Caco-2 (cell line): ENCODE measurements at regions of chr10 and their contacts with region 1.

Region 1: GRCh38 chr10:14185316-14186045 is 145.2 kb downstream of the FRMD4A start:
- DNase-seq: peak; percentile 92 to 96
- H3K4me3 ChIP-seq: no peak overlapping the region; the same call in 1 of the 2 replicates
- H3K4me3 Mint-ChIP-seq: peak overlapping the region; percentile 73
- H3K27ac Mint-ChIP-seq: peak overlapping the region; percentile 99
- H3K4me1 ChIP-seq: peaks cover 15% of the 10 kb centered on the region
- H3K4me1 Mint-ChIP-seq: peaks cover 30% of the 10 kb centered on the region
- H3K27me3 ChIP-seq: no peaks in the 10 kb centered on the region
- H3K27me3 Mint-ChIP-seq: peaks cover 4% of the 10 kb centered on the region
- CTCF ChIP-seq: no peak

Region 2: DNA sequence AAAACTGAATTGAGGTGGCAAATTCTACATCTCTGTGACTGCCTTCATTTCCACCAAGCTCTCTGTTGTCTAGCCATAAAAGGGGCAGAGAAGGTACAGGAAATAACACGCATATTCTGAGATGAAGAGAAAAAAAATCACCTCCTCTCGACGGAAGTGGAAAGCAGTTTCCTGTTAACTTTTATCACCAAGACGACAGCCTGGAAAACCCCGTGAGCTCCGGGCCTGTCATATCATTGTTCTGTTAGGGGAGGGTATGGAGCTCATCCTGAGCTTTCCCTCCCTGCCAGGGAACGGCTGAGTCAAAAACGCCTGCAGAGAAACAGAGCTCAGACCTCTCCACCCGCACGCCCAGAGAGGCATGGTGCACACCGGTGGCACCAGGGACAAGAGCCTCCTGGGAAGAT is 398.5 kb before region 1 on chr10:
- CTCF ChIA-PET with region 1: interaction called, 3 read pairs
- POLR2A ChIA-PET with region 1: interaction called, 3 read pairs
- intact Hi-C with region 1: loop called (anchors 5 kb)
- DNase-seq: no peak
- H3K4me3 ChIP-seq: no peak overlapping the region
- H3K4me3 Mint-ChIP-seq: no peak overlapping the region
- H3K27ac Mint-ChIP-seq: no peak overlapping the region
- H3K4me1 ChIP-seq: no peaks in the 10 kb centered on the region; the same call in 1 of the 2 replicates
- H3K4me1 Mint-ChIP-seq: no peaks in the 10 kb centered on the region
- H3K27me3 ChIP-seq: no peaks in the 10 kb centered on the region; the same call in 1 of the 2 replicates
- H3K27me3 Mint-ChIP-seq: no peaks in the 10 kb centered on the region
- CTCF ChIP-seq: no peak

Region 3: DNA sequence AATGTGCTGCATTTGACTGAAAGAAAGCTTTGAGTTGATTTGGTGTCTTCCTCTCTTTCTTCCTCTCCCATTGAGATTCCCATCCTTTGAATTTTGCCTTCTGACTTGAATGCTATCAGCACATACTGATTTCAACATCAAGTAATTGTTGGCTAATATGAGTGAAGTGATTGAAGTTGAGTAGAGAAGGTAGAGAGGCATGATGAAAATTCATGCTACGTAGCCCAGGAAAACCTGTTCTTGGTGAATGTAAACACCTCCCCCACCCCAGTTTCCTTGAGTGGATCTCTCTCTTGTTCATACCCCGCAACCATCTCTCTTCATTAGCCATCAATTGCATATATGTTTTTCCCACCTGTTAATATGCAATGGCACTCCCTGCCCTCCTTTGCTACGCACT is 48.1 kb before region 1 on chr10:
- CTCF ChIA-PET with region 1: no interaction called
- POLR2A ChIA-PET with region 1: interaction called, 3 read pairs
- intact Hi-C with region 1: loop called (anchors 1 kb)
- DNase-seq: peak in 1 of 2 experiments; percentile 57
- H3K4me3 ChIP-seq: no peak overlapping the region
- H3K4me3 Mint-ChIP-seq: no peak overlapping the region
- H3K27ac Mint-ChIP-seq: peak overlapping the region; percentile 19
- H3K4me1 ChIP-seq: peaks cover 11% of the 10 kb centered on the region
- H3K4me1 Mint-ChIP-seq: peaks cover 14% of the 10 kb centered on the region
- H3K27me3 ChIP-seq: no peaks in the 10 kb centered on the region
- H3K27me3 Mint-ChIP-seq: peaks cover 6% of the 10 kb centered on the region
- CTCF ChIP-seq: no peak

Region 4: DNA sequence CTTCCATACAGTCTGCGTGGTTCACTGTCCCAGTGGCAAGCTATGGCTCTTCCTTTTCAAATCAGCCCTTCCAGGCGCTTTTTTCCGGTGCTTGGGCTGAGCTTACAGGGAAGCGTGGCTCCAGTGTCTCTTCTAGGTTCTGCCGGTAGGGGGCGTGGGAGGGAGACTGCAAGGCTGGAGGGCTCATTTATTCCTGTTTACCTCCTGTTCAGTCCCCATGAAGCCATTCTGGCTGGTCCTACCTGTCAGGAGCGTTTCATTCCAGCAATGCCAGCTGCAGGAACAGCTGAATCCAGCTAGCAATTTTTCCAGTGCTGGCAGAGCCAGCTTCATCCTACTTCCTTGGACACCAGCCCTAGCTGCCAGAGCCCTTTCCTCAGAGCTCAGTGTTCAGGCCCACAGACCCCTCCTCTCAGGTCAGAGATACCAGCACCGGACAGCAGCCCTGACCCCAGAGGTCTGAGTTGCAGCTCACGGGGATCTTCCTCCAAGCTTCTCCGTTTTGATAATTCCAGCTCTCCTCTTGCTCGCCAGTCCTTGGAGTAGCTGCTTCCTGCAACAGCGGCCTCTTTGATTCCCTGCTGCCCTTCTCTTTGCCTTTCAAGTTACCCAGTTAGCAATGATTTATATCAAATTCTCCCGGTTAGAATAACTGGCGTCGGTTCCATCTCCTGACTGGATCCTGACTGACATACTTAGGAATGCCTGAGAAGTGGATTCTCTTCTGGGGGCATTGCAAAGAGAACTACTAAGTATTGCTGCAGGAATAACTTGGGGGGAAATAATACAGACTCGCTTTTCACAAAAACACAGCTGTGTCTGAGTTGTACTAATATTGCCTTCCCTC is 15.4 kb after region 1 on chr10:
- CTCF ChIA-PET with region 1: interaction called, 49 read pairs
- POLR2A ChIA-PET with region 1: interaction called, 7 read pairs
- intact Hi-C with region 1: no loop called
- DNase-seq: peak in 1 of 2 experiments; percentile 49
- H3K4me3 ChIP-seq: no peak overlapping the region
- H3K4me3 Mint-ChIP-seq: no peak overlapping the region
- H3K27ac Mint-ChIP-seq: no peak overlapping the region
- H3K4me1 ChIP-seq: no peaks in the 10 kb centered on the region
- H3K4me1 Mint-ChIP-seq: peaks cover 4% of the 10 kb centered on the region
- H3K27me3 ChIP-seq: no peaks in the 10 kb centered on the region
- H3K27me3 Mint-ChIP-seq: peaks cover 3% of the 10 kb centered on the region
- CTCF ChIP-seq: peak; percentile 41 to 57

Region 5: DNA sequence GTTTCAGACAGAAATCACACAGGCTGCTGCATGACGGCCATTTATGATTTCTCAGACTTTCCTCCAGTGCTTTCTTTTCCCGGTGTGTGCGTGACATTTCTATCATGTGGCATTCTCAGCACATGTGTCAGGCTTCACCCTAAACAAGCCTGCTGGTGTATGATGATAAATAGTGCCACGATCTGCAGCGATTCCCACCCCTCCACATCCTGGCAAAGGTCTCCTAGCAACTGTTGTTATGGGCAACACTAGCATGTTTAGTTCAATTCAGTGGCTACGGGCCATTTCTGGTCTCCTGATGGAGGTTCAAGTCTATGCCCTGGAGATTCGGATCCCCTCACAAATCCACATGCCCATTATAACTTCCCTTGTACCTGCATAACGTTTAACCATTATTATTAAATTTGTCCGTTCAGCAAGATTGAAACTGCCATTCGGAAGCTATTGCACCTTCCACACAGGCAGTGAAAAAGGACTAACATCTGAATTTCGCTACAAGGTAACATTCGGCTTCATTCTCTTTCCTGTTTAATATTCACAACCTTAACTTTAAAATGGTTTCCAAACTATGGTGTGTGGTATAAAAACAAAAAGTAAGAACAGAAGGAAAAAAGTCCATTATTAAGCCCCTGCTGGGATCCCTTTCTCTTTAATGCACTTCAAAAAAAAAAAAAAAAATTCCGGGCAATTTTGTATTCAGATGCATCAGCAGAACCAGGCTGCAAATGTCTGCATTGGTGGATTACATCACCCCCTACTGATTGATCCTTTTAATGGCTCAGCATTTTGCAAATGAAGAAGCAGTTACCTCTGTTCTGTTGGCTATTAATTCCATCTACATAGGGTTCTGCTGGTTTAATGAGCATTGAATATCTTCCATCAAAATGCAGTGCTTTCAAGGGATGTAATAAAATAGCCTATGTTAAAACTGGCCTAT is 55.0 kb after region 1 on chr10:
- CTCF ChIA-PET with region 1: interaction called, 10 read pairs
- POLR2A ChIA-PET with region 1: interaction called, 4 read pairs
- intact Hi-C with region 1: no loop called
- DNase-seq: no peak
- H3K4me3 ChIP-seq: no peak overlapping the region
- H3K4me3 Mint-ChIP-seq: no peak overlapping the region
- H3K27ac Mint-ChIP-seq: no peak overlapping the region
- H3K4me1 ChIP-seq: no peaks in the 10 kb centered on the region; the same call in 1 of the 2 replicates
- H3K4me1 Mint-ChIP-seq: peaks cover 7% of the 10 kb centered on the region
- H3K27me3 ChIP-seq: no peaks in the 10 kb centered on the region
- H3K27me3 Mint-ChIP-seq: no peaks in the 10 kb centered on the region
- CTCF ChIP-seq: peak; percentile 12 to 21

Region 6: GRCh38 chr10:14543046-14543903 is 357.8 kb after region 1 on chr10:
- CTCF ChIA-PET with region 1: no interaction called
- POLR2A ChIA-PET with region 1: interaction called, 3 read pairs
- intact Hi-C with region 1: loop called (anchors 5 kb)
- DNase-seq: no peak
- H3K4me3 ChIP-seq: no peak overlapping the region
- H3K4me3 Mint-ChIP-seq: no peak overlapping the region
- H3K27ac Mint-ChIP-seq: peak overlapping the region; percentile 59
- H3K4me1 ChIP-seq: peaks cover 42% of the 10 kb centered on the region
- H3K4me1 Mint-ChIP-seq: peaks cover 52% of the 10 kb centered on the region
- H3K27me3 ChIP-seq: no peaks in the 10 kb centered on the region
- H3K27me3 Mint-ChIP-seq: no peaks in the 10 kb centered on the region
- CTCF ChIP-seq: peak in 1 of 2 experiments; percentile 45

Region 7: GRCh38 chr10:14604181-14605142 is 419.0 kb after region 1 on chr10:
- CTCF ChIA-PET with region 1: no interaction called
- POLR2A ChIA-PET with region 1: no interaction called
- intact Hi-C with region 1: no loop called
- DNase-seq: peak; percentile 79 to 89
- H3K4me3 ChIP-seq: peak overlapping the region; percentile 49
- H3K4me3 Mint-ChIP-seq: peak overlapping the region; percentile 80
- H3K27ac Mint-ChIP-seq: peak overlapping the region; percentile 43
- H3K4me1 ChIP-seq: peaks cover 51% of the 10 kb centered on the region
- H3K4me1 Mint-ChIP-seq: peaks cover 40% of the 10 kb centered on the region
- H3K27me3 ChIP-seq: no peaks in the 10 kb centered on the region
- H3K27me3 Mint-ChIP-seq: no peaks in the 10 kb centered on the region
- CTCF ChIP-seq: no peak

Region 8: GRCh38 chr10:15548381-15548780 is 1362.9 kb after region 1 on chr10:
- CTCF ChIA-PET with region 1: no interaction called
- POLR2A ChIA-PET with region 1: no interaction called
- intact Hi-C with region 1: no loop called
- DNase-seq: no peak
- H3K4me3 ChIP-seq: no peak overlapping the region
- H3K4me3 Mint-ChIP-seq: no peak overlapping the region
- H3K27ac Mint-ChIP-seq: no peak overlapping the region
- H3K4me1 ChIP-seq: no peaks in the 10 kb centered on the region
- H3K4me1 Mint-ChIP-seq: no peaks in the 10 kb centered on the region
- H3K27me3 ChIP-seq: no peaks in the 10 kb centered on the region
- H3K27me3 Mint-ChIP-seq: peaks cover 23% of the 10 kb centered on the region
- CTCF ChIP-seq: no peak